Natural killer cell (primary cell): ENCODE measurements at regions of chr1 and their contacts with region 1.

Region 1: DNA sequence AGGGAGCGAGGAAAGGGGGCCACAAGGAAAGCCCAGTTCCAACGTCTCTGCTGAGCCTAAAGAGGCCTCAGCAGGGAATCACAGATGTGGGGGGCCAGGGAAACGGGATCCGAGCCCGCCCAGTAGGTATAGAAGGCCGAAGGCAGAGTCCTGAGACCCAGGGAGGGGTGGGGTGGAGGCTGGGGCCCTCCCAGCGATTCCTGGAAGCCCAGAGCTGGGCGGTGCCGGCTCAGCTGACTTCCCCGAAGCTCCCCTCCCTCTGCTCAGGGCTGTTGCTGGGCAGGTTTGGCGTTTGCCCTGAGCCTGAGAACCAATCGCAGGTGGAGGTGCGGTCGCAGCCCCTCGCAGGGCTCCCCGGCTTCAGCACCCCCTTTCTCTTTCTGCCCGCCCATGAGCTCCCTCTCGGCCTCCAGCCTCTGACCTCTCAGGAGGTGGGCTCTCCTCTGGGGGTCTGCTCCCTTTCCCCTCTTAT is 12.8 kb downstream of the ADAMTSL4 start:
- DNase-seq: peak; percentile 64 to 88
- ATAC-seq: peak; percentile 37 to 70 (median 38)
- H3K4me3 ChIP-seq: peak overlapping the region; percentile 62
- H3K4me3 Mint-ChIP-seq: peak overlapping the region; percentile 98
- H3K27ac ChIP-seq: peak overlapping the region; percentile 95
- H3K27ac Mint-ChIP-seq: peak overlapping the region; percentile 98 to 99
- H3K4me1 ChIP-seq: peaks cover 80% of the 10 kb centered on the region
- H3K4me1 Mint-ChIP-seq: peaks cover 64 to 75% of the 10 kb centered on the region in 2 donors
- H3K27me3 ChIP-seq: no peaks in the 10 kb centered on the region
- H3K27me3 Mint-ChIP-seq: no peaks in the 10 kb centered on the region
- CTCF ChIP-seq: peak; percentile 10

Region 2: GRCh38 chr1:150363426-150364230 is 198.4 kb before region 1 on chr1 and contains the start of gene RPRD2:
- intact Hi-C with region 1: loop called (anchors 5 kb)
- DNase-seq: peak; percentile 94 to 100
- ATAC-seq: peak; percentile 91 to 99 (median 95)
- H3K4me3 ChIP-seq: peak within 1 kb of the TSS; percentile 72
- H3K4me3 Mint-ChIP-seq: peak within 1 kb of the TSS; percentile 96
- H3K27ac ChIP-seq: peak within 1 kb of the TSS; percentile 97
- H3K27ac Mint-ChIP-seq: peak within 1 kb of the TSS; percentile 96 to 98
- H3K4me1 ChIP-seq: peaks cover 14% of the 10 kb centered on the region
- H3K4me1 Mint-ChIP-seq: peaks cover 35 to 38% of the 10 kb centered on the region in 2 donors
- H3K27me3 ChIP-seq: no peaks in the 10 kb centered on the region
- H3K27me3 Mint-ChIP-seq: no peaks in the 10 kb centered on the region
- CTCF ChIP-seq: no peak
- total RNA-seq, gene RPRD2: 30.3 to 38.8 (median 34.0) TPM

Region 3: GRCh38 chr1:150613061-150613920 is 51.3 kb after region 1 on chr1:
- intact Hi-C with region 1: loop called (anchors 1 kb)
- DNase-seq: peak; percentile 27 to 81
- ATAC-seq: peak; percentile 19 to 64 (median 42)
- H3K4me3 ChIP-seq: no peak overlapping the region
- H3K4me3 Mint-ChIP-seq: peak overlapping the region; percentile 33
- H3K27ac ChIP-seq: peak overlapping the region; percentile 98
- H3K27ac Mint-ChIP-seq: peak overlapping the region; percentile 90 to 91
- H3K4me1 ChIP-seq: peaks cover 42% of the 10 kb centered on the region
- H3K4me1 Mint-ChIP-seq: peaks cover 40 to 48% of the 10 kb centered on the region in 2 donors
- H3K27me3 ChIP-seq: no peaks in the 10 kb centered on the region
- H3K27me3 Mint-ChIP-seq: no peaks in the 10 kb centered on the region
- CTCF ChIP-seq: no peak

Region 4: GRCh38 chr1:150629115-150629928 is 67.3 kb after region 1 on chr1 and contains the start of gene ENSA:
- intact Hi-C with region 1: loop called (anchors 2 kb)
- DNase-seq: peak; percentile 94 to 99
- ATAC-seq: peak; percentile 82 to 95 (median 84)
- H3K4me3 ChIP-seq: peak within 1 kb of the TSS; percentile 62
- H3K4me3 Mint-ChIP-seq: no peak within 1 kb of the TSS
- H3K27ac ChIP-seq: peak within 1 kb of the TSS; percentile 99
- H3K27ac Mint-ChIP-seq: no peak within 1 kb of the TSS
- H3K4me1 ChIP-seq: peaks cover 18% of the 10 kb centered on the region
- H3K4me1 Mint-ChIP-seq: peaks cover 6 to 9% of the 10 kb centered on the region in 2 donors
- H3K27me3 ChIP-seq: no peaks in the 10 kb centered on the region
- H3K27me3 Mint-ChIP-seq: no peaks in the 10 kb centered on the region
- CTCF ChIP-seq: no peak
- total RNA-seq, gene ENSA: 185 to 228 (median 220) TPM

Region 5: GRCh38 chr1:150765296-150765976 is 203.4 kb after region 1 on chr1 and contains the start of gene CTSS:
- intact Hi-C with region 1: loop called (anchors 10 kb)
- DNase-seq: peak in 1 of 2 donors; percentile 61
- ATAC-seq: peak; percentile 68 to 79 (median 69)
- H3K4me3 ChIP-seq: peak within 1 kb of the TSS; percentile 49
- H3K4me3 Mint-ChIP-seq: peak within 1 kb of the TSS; percentile 99
- H3K27ac ChIP-seq: peak within 1 kb of the TSS; percentile 74
- H3K27ac Mint-ChIP-seq: peak within 1 kb of the TSS; percentile 97 to 98
- H3K4me1 ChIP-seq: peaks cover 19% of the 10 kb centered on the region
- H3K4me1 Mint-ChIP-seq: peaks cover 38 to 40% of the 10 kb centered on the region in 2 donors
- H3K27me3 ChIP-seq: no peaks in the 10 kb centered on the region
- H3K27me3 Mint-ChIP-seq: peaks cover 0 to 2% of the 10 kb centered on the region in 2 donors
- CTCF ChIP-seq: no peak
- total RNA-seq, gene CTSS: 169 to 245 (median 229) TPM

Region 6: DNA sequence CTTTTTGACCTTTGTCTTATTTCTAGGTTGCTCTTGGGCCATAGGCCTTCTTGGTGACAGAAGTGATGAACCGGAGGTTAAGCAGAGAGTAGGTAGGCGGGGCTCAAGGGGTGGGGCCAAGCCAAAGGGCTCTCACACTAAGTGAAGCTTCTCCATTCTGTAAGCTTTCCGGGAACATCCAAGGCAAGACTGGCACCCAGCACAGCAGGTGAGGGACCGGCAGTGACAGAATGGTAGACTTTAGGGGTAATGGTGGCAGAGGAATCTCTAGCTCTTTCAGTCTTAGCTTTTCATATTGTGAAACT is 594.5 kb after region 1 on chr1 and contains the start of gene TNFAIP8L2:
- intact Hi-C with region 1: loop called (anchors 5 kb)
- DNase-seq: peak; percentile 58 to 80
- ATAC-seq: peak; percentile 83 to 91 (median 89)
- H3K4me3 ChIP-seq: peak within 1 kb of the TSS; percentile 76
- H3K4me3 Mint-ChIP-seq: peak within 1 kb of the TSS; percentile 96
- H3K27ac ChIP-seq: peak within 1 kb of the TSS; percentile 68
- H3K27ac Mint-ChIP-seq: peak within 1 kb of the TSS; percentile 89 to 96
- H3K4me1 ChIP-seq: peaks cover 46% of the 10 kb centered on the region
- H3K4me1 Mint-ChIP-seq: peaks cover 39 to 47% of the 10 kb centered on the region in 2 donors
- H3K27me3 ChIP-seq: no peaks in the 10 kb centered on the region
- H3K27me3 Mint-ChIP-seq: no peaks in the 10 kb centered on the region
- CTCF ChIP-seq: no peak
- total RNA-seq, gene TNFAIP8L2: 4.8 to 14.5 (median 5.7) TPM